ENCODE measurements at regions of chr20 and their contacts with region 1.

Region 1: DNA sequence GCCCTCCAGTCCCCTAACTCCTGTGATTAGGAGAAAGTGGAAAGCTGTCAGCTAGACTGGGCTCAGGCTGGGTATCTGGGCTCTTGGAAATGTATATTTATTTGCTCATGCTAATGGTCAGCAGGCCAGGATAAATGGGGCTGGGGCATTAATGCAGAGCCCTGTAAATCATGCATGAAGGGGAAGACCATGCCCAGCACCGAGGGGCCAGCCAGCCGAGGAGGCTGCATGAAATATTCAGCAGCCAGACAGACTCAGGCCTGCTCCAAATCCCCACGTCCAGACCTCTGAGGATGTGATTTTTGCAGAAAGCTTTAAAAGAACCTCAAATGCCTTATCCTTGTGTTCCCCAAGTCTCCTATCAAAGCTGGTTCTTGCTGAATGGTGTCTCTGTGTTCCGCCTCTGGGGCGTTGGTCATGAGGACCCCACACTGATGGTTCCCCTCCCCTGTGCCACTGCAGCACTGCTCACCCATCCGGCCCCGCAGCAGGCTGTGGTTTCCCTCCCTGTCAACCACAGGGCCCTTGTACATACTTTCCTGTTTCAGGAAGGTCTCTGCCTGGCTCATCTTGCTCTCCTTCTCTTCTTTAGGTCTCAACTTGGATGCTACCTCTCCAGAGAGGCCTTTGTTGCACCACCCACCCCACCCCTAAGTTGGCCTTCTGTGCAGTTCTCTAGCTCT is 358.4 kb downstream of the CDH26 start:
- DNase-seq: no peak
- ATAC-seq: no peak

Region 2: DNA sequence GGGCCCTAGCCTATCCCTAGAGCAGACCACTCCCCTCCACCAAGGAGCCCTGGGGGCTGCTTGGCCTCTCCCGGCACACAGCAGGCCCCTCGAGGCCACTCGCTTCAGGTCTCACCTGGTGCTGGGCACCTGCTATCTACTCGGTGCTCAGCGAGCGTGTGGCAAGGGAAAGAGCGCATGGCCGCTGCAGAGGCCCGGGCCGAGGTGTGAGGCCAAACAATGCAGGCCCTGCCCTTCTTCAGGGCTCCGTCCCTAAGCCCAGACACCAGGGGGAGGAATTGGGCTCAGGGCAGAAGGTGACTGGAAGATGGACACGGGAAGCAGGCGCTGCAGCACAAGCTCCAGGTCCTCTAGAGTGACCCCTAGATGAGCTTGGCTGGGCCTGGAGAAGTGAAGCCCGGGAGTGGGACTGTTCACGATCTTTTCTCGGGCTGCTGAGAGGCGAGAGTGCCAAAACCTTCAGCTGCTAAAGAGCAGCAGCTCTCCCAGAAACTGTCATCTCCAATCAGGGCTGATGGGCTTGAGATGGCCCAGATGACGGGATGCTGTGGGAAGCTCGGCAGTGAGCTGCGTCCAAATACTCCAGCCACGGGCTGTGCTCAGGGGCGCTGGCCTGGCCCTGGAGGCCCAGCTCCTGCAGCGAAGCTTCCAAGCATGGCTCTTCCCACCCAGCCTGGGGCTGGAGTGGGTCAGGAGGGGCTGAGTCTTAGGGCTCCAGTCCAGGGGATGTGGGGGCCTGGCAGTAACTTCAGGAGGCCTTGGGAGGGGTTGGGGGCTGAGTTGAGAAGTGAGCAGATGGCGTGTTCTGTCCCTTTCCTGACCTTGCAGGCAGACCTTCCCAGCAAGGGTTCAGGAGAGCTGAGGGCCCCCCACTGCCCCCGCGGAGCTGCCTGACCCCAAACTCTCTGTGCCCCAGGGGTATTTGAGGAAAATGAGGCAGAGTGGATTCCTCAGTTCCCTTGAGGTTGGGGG is 1845.1 kb before region 1 on chr20:
- intact Hi-C with region 1: loop called (anchors 5 kb)
- DNase-seq: no peak
- ATAC-seq: peak; percentile 86

Region 3: GRCh38 chr20:60228255-60228654 is 88.4 kb before region 1 on chr20:
- intact Hi-C with region 1: no loop called
- DNase-seq: no peak
- ATAC-seq: no peak